Activated T-helper 2 cell treated with anti-CD3 and anti-CD28 coated beads, Interferon-gamma antibody, Interleukin-2, Interleukin-4, amounts not matched to agents 10 μg/mL and 5 μg/mL and 100 μg/mL, durations not matched to agents 14 hours and 24 hours and 36 hours (primary cell): ENCODE measurements at regions of chr4 and their contacts with region 1.

Region 1: GRCh38 chr4:139453371-139454110 is 380 bp upstream of the RAB33B start:
- DNase-seq: peak; percentile 96
- H3K4me3 Mint-ChIP-seq: peak overlapping the region; percentile 90
- H3K27ac Mint-ChIP-seq: peak overlapping the region; percentile 99
- H3K4me1 Mint-ChIP-seq: peaks cover 52% of the 10 kb centered on the region
- H3K27me3 Mint-ChIP-seq: no peaks in the 10 kb centered on the region

Region 2: DNA sequence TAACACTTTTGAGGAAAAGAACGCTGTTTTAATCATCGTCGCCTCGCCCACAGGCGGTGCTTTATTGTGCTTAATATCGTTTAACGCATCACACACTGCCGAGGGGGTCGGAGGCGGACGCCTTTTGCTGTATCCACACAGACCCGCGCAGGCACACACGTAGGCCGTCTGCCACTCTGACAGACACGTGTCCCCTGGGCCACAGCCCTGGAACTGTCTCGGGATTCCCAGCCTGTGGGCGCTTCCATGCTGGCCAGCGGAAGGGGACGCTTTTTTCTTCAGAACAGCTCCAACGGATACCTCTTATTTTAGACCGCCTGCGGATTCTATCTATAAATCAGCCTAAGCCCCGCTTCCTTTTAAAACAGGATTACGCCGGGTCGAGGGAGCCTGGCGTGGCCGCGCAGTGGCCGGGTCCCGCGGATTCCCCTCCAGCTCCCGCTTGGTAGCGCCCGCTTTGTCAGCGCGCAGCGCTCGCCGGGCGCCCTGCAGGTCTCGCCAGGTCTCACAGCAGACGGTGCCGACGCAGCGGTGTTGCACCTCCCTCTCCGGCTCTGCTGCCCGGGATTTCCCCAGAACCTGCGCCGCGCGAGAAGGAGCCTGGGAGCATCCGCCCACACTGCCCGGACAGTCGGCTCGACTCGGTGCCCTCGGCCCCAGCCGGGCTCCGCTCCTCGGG is 438.1 kb before region 1 on chr4 and contains the start of gene NOCT:
- intact Hi-C with region 1: loop called (anchors 5 kb)
- DNase-seq: peak; percentile 89
- H3K4me3 Mint-ChIP-seq: peak within 1 kb of the TSS; percentile 89
- H3K27ac Mint-ChIP-seq: peak within 1 kb of the TSS; percentile 93
- H3K4me1 Mint-ChIP-seq: peaks cover 41% of the 10 kb centered on the region
- H3K27me3 Mint-ChIP-seq: no peaks in the 10 kb centered on the region
- total RNA-seq, gene NOCT: 20.3 and 22.1 TPM in 2 replicates

Region 3: DNA sequence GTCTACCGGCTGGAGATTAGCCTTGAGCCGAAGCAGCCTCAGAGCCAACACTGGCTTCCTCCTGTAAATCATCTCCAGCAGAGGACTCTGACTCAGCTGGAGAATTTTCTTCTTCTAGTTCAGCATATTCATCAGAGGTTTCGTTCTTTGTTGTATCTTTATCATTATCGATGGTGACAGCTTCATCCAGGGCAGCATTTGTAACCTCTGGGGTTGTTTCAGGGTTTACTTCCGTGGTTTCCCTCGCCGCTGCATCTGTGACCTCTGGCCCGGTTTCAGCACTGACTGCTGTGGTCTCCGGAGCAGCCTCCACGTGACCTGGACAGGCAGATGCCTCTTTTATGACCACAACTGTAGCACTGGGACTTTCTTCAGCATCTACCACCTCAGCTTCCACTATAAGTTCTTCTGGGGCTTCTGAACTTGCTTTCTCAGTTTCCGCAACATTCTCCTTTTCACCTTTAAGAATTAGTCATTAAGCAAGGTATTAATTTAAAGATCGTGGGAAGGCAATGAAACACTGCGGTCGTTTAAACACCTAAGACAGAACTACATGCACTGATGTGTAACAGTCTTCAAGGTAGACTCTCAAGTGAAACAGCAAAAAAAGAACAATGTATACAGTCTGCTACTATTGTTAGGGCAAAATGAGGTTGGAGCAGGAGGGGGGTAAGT is 186.8 kb before region 1 on chr4:
- intact Hi-C with region 1: loop called (anchors 1 kb)
- DNase-seq: peak; percentile 77
- H3K4me3 Mint-ChIP-seq: peak overlapping the region; percentile 37
- H3K27ac Mint-ChIP-seq: peak overlapping the region; percentile 73
- H3K4me1 Mint-ChIP-seq: peaks cover 27% of the 10 kb centered on the region
- H3K27me3 Mint-ChIP-seq: peaks cover 18% of the 10 kb centered on the region

Region 4: GRCh38 chr4:139416073-139416673 is 37.4 kb before region 1 on chr4:
- intact Hi-C with region 1: loop called (anchors 2 kb)
- DNase-seq: no peak
- H3K4me3 Mint-ChIP-seq: no peak overlapping the region
- H3K27ac Mint-ChIP-seq: no peak overlapping the region
- H3K4me1 Mint-ChIP-seq: peaks cover 8% of the 10 kb centered on the region
- H3K27me3 Mint-ChIP-seq: no peaks in the 10 kb centered on the region

Region 5: DNA sequence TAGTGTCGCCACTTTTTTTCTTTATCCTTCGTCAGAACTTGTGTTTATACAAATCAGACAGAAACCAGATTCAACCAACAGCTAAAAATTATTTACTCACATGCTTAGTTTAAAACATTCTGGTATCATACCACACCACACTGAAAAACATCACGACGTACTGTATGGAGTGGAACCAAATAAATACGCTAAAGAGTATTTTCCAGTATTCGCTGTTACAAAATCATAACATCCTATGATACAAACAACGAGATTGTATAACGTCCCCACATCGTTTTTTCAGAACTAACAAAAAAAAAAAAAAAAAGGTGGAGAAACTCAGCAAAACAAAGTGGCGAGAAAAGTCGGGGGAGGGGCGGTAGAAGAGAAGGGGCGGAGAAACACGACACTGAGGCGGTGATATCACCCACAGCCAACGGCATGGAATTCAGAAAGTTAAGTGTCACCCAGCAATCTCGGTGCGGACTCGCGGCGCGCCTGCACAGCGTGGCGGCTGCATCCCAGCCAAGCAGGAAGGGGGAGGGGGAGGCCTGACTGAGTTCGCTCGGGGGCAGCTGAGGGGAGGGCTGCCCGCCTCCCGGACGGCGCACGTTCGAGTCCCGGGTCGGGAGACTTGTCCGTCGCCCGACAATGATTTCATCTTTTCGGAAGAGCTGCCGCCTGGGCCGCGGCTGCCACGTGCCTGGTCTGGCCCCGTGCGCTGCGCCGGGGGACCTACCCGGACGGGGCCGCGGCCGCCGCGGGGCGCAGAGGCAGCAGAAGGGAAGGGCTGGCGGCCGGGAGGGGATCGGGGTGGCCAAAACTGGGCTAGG is 101.6 kb after region 1 on chr4:
- intact Hi-C with region 1: loop called (anchors 1 kb)
- DNase-seq: peak; percentile 82
- H3K4me3 Mint-ChIP-seq: peak overlapping the region; percentile 97
- H3K27ac Mint-ChIP-seq: peak overlapping the region; percentile 98
- H3K4me1 Mint-ChIP-seq: peaks cover 47% of the 10 kb centered on the region
- H3K27me3 Mint-ChIP-seq: peaks cover 4% of the 10 kb centered on the region

Region 6: GRCh38 chr4:140095694-140096482 is 642.3 kb after region 1 on chr4:
- intact Hi-C with region 1: loop called (anchors 10 kb)
- DNase-seq: peak; percentile 61
- H3K4me3 Mint-ChIP-seq: peak overlapping the region; percentile 86
- H3K27ac Mint-ChIP-seq: peak overlapping the region; percentile 99
- H3K4me1 Mint-ChIP-seq: peaks cover 82% of the 10 kb centered on the region
- H3K27me3 Mint-ChIP-seq: no peaks in the 10 kb centered on the region